Mammary epithelial cell (primary cell): ENCODE measurements at regions of chr3 and their contacts with region 1.

Region 1: GRCh38 chr3:193483988-193484539 is 70.6 kb downstream of the ATP13A4 start:
- DNase-seq: no peak
- H3K4me3 ChIP-seq: no peak overlapping the region
- H3K27ac ChIP-seq: no peak overlapping the region
- H3K4me1 ChIP-seq: no peaks in the 10 kb centered on the region
- H3K27me3 ChIP-seq: peaks cover 3% of the 10 kb centered on the region
- CTCF ChIP-seq: no peak

Region 2: GRCh38 chr3:193510154-193510553 is 26.1 kb after region 1 on chr3:
- CTCF ChIA-PET with region 1: no interaction called
- dilution Hi-C with region 1: loop called (anchors 5 kb)
- in situ Hi-C with region 1: no loop called
- intact Hi-C with region 1: no loop called
- DNase-seq: no peak
- H3K4me3 ChIP-seq: no peak overlapping the region
- H3K27ac ChIP-seq: no peak overlapping the region
- H3K4me1 ChIP-seq: no peaks in the 10 kb centered on the region
- H3K27me3 ChIP-seq: no peaks in the 10 kb centered on the region
- CTCF ChIP-seq: no peak

Region 3: GRCh38 chr3:194030369-194030768 is 546.3 kb after region 1 on chr3:
- CTCF ChIA-PET with region 1: no interaction called
- dilution Hi-C with region 1: no loop called
- in situ Hi-C with region 1: no loop called
- intact Hi-C with region 1: no loop called
- DNase-seq: peak; percentile 17
- H3K4me3 ChIP-seq: no peak overlapping the region
- H3K27ac ChIP-seq: no peak overlapping the region
- H3K4me1 ChIP-seq: peaks cover 4% of the 10 kb centered on the region
- H3K27me3 ChIP-seq: no peaks in the 10 kb centered on the region
- CTCF ChIP-seq: no peak